ENCODE measurements at regions of chr4 and their contacts with region 1.

Region 1: DNA sequence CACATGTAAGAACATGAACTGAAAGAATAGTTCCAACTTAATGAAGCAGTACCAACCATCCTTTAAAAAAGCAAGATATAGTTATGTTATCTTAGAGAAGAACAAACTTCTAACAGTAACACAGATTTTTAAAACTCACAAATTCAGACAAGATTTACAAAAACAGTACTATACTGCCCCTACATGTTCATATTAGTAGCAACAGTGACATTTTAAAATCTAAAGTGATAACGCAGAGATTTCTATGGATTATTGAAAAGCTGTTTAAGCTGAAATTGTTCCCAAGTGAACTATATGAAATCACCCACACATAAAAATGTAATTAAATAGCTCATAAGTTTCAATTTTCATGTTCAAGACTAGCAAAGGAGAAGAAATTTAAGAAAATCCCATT is 166.0 kb downstream of the FBXW7 start:
- DNase-seq: no peak
- ATAC-seq: no peak

Region 2: GRCh38 chr4:151783867-151784266 is 586.0 kb before region 1 on chr4:
- intact Hi-C with region 1: no loop called
- DNase-seq: no peak
- ATAC-seq: no peak

Region 3: GRCh38 chr4:152032722-152033131 is 337.2 kb before region 1 on chr4:
- intact Hi-C with region 1: loop called (anchors 10 kb)
- DNase-seq: no peak
- ATAC-seq: peak; percentile 68